Activated T-helper 1 cell treated with anti-CD3 and anti-CD28 coated beads, Interleukin-12 subunit alpha, Interleukin-12 subunit beta, Interleukin-2, Interleukin-4 antibody, amounts not matched to agents 30 ng/mL and 10 ng/mL and 1 ng/mL, durations not matched to agents 14 hours and 24 hours and 36 hours (primary cell): ENCODE measurements at regions of chr12 and their contacts with region 1.

Region 1: GRCh38 chr12:64890873-64891468 is 66.5 kb downstream of the TBC1D30 start:
- DNase-seq: no peak
- H3K4me3 Mint-ChIP-seq: no peak overlapping the region
- H3K27ac Mint-ChIP-seq: no peak overlapping the region
- H3K4me1 Mint-ChIP-seq: no peaks in the 10 kb centered on the region
- H3K27me3 Mint-ChIP-seq: peaks cover 1% of the 10 kb centered on the region

Region 2: GRCh38 chr12:64801381-64801780 is 89.6 kb before region 1 on chr12:
- intact Hi-C with region 1: loop called (anchors 5 kb)
- DNase-seq: no peak
- H3K4me3 Mint-ChIP-seq: no peak overlapping the region
- H3K27ac Mint-ChIP-seq: no peak overlapping the region
- H3K4me1 Mint-ChIP-seq: no peaks in the 10 kb centered on the region
- H3K27me3 Mint-ChIP-seq: peaks cover 32% of the 10 kb centered on the region

Region 3: GRCh38 chr12:65232476-65233077 is 341.6 kb after region 1 on chr12:
- intact Hi-C with region 1: loop called (anchors 1 kb)
- DNase-seq: no peak
- H3K4me3 Mint-ChIP-seq: no peak overlapping the region
- H3K27ac Mint-ChIP-seq: no peak overlapping the region
- H3K4me1 Mint-ChIP-seq: peaks cover 15% of the 10 kb centered on the region
- H3K27me3 Mint-ChIP-seq: no peaks in the 10 kb centered on the region

Region 4: GRCh38 chr12:66087365-66087943 is 1196.5 kb after region 1 on chr12:
- intact Hi-C with region 1: loop called (anchors 1 kb)
- DNase-seq: peak; percentile 22
- H3K4me3 Mint-ChIP-seq: no peak overlapping the region
- H3K27ac Mint-ChIP-seq: no peak overlapping the region
- H3K4me1 Mint-ChIP-seq: no peaks in the 10 kb centered on the region
- H3K27me3 Mint-ChIP-seq: peaks cover 25% of the 10 kb centered on the region

Region 5: GRCh38 chr12:66693901-66694675 is 1803.1 kb after region 1 on chr12:
- intact Hi-C with region 1: loop called (anchors 2 kb)
- DNase-seq: no peak
- H3K4me3 Mint-ChIP-seq: no peak overlapping the region
- H3K27ac Mint-ChIP-seq: no peak overlapping the region
- H3K4me1 Mint-ChIP-seq: no peaks in the 10 kb centered on the region
- H3K27me3 Mint-ChIP-seq: peaks cover 14% of the 10 kb centered on the region